OCI-LY7 (cell line): ENCODE measurements at regions of chr9 and their contacts with region 1.

Region 1: DNA sequence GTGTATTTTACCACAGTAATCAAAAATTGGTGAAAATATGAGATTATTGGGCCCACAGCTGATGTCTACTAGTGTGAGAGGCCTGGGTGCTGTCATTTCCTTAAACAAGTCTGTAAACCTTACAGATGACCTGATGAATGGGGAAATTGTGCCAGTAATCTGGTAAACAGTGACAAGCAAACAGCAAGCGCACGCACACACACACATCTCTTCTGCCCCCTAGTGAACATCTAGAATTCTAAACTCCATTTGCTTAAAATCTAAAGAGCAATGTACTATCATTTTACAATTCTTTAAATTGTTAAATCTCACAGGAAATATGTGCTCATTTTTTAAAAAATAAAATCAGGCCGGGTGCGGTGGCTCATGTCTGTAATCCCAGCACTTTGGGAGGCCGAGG is 7.5 kb upstream of the RAPGEF1 start:
- DNase-seq: peak; percentile 82
- H3K4me3 ChIP-seq: no peak overlapping the region
- H3K27ac ChIP-seq: peak overlapping the region; percentile 96
- H3K4me1 ChIP-seq: peaks cover 96% of the 10 kb centered on the region
- CTCF ChIP-seq: peak; percentile 84

Region 2: DNA sequence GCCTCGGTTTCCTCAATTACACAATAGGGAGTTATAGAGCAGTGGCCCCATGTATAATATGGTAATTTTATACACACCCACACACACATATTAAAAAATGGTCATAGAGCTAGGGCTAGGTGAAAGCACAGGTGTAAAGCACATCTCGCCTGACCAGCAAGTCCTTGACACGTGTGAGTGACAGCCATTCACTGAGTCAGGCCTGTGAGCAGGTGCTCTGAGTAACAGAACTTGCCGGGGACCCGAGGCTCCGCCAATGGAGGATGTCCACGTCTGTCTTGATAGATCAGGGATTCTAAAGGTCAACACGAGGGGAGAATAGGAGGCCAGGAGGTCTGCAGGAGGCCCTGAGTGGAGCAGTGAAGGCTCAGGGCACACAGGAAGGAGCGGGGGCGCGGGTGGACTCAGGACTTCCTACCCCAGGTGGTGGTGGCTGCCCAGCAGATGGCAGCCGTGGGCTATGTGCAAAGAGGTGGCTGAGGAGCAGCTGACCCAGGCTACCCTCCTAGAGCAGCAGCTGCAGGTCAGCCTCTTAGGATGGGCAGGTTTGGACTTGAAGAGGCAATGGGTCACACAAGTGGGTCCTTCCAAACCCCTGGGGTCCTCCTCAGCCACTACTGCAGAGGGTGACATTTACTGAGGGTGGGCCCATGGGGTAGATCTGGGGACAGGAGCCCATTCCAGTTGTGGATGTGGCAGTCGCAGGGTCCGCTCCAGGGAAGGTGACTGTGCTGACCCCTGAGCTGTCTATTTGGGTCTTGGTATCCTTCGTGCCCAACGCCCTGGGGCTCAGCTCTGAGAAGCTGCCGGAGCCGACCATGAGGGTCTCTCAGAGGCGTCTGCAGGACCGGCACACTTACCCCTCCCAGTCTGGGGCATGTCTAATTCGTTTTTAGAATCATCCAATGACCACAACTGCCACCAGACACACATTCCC is 156.2 kb before region 1 on chr9:
- CTCF ChIA-PET with region 1: interaction called, 3 read pairs
- POLR2A ChIA-PET with region 1: no interaction called
- intact Hi-C with region 1: loop called (anchors 1 kb)
- DNase-seq: peak; percentile 81
- H3K4me3 ChIP-seq: no peak overlapping the region
- H3K27ac ChIP-seq: no peak overlapping the region
- H3K4me1 ChIP-seq: no peaks in the 10 kb centered on the region
- CTCF ChIP-seq: peak; percentile 82